HepG2 (cell line): ENCODE measurements at regions of chr16 and their contacts with region 1.

Region 1: DNA sequence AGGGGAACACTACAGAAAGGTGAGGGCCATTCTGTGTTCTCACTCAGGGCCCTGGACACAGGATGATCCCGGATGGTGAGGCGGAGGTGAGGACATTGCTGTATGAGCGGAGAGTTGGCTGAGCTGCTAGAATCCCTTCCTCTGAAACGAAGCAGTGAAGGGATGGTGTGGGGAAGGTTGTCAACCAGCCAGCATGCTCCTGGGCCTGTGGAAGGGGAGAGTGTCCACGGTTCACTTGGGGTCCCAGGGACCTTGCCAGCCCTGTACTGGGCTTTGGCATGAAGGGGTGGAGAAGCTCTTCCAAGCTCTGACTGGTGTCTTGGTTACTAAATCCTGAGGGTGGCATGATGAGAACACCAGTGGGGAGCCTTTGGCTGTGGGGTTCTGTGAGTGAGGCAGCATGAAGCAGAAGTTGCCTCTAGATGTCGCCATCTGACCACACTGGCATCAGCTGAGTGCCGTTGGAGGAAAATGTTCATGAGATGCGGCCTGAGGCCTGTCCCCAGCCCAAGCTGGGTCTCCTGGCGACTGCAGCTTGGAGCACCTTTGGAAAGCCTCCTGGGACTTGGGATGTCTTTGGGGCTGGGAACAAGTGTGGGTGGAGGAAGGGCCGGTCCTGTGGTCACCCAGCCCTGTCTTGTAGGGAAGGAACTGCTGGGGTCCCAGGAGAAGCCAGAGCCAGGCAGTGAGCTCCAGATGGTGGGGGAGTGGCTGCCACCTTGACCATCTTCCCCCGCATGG is 14.8 kb downstream of the PDP2 start:
- DNase-seq: peak; percentile 80
- ATAC-seq: peak; percentile 90
- H3K4me3 ChIP-seq: no peak overlapping the region; a peak in 1 of 6 replicates
- H3K27ac ChIP-seq: no peak overlapping the region
- H3K4me1 ChIP-seq: peaks cover 63% of the 10 kb centered on the region
- H3K27me3 ChIP-seq: peaks cover 0 to 2% of the 10 kb centered on the region in 2 experiments; a peak in 1 of 5 replicates
- CTCF ChIP-seq: peak; percentile 100
- EP300 ChIP-seq: no peak
- POLR2A ChIP-seq: no peak
- RAD21 ChIP-seq: peak; percentile 99

Region 2: DNA sequence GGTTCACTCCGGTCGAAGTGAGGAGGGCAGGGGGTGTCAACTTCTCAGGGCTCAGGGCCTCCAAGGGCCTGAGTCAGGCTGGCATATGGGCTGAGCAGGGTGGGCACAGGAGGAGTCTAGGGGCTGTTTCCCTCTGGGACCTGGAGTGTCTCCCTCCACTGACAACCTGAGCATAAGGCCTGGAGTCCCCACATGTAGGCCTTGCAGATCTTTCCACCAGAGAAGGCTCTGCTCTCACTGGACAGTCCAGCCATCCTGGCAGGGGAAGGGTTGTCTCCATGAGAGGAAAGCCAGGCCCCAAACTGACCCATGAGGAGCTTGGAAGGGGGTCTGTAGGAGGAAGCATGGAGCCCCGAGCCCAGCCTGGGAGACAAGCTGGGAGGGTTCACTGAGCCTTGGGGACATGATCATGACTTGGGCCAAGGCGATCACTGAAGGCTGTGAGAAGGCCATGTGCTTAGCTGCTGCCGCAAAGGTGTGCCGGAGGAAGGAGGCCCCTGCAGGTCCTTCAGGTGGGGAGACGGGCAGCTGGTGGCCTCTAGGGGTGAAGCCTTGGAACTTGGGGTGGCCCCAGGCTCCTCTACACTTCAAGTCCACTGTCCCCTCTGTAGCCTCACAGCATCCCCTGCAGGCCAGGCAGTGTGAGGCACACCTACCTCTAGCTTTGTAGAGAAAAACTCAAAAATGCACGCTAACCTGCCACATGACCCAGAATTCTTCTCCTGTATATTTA is 306.0 kb before region 1 on chr16:
- CTCF ChIA-PET with region 1: no interaction called
- POLR2A ChIA-PET with region 1: no interaction called
- in situ Hi-C with region 1: no loop called
- intact Hi-C with region 1: no loop called
- DNase-seq: peak; percentile 55
- ATAC-seq: peak; percentile 95
- H3K4me3 ChIP-seq: no peak overlapping the region
- H3K27ac ChIP-seq: no peak overlapping the region
- H3K4me1 ChIP-seq: peaks cover 9% of the 10 kb centered on the region; the same call in 1 of the 2 replicates
- H3K27me3 ChIP-seq: peaks cover 3 to 28% of the 10 kb centered on the region in 2 experiments; a peak in 4 of 5 replicates
- CTCF ChIP-seq: peak; percentile 84
- EP300 ChIP-seq: no peak
- POLR2A ChIP-seq: no peak
- RAD21 ChIP-seq: peak; percentile 79

Region 3: DNA sequence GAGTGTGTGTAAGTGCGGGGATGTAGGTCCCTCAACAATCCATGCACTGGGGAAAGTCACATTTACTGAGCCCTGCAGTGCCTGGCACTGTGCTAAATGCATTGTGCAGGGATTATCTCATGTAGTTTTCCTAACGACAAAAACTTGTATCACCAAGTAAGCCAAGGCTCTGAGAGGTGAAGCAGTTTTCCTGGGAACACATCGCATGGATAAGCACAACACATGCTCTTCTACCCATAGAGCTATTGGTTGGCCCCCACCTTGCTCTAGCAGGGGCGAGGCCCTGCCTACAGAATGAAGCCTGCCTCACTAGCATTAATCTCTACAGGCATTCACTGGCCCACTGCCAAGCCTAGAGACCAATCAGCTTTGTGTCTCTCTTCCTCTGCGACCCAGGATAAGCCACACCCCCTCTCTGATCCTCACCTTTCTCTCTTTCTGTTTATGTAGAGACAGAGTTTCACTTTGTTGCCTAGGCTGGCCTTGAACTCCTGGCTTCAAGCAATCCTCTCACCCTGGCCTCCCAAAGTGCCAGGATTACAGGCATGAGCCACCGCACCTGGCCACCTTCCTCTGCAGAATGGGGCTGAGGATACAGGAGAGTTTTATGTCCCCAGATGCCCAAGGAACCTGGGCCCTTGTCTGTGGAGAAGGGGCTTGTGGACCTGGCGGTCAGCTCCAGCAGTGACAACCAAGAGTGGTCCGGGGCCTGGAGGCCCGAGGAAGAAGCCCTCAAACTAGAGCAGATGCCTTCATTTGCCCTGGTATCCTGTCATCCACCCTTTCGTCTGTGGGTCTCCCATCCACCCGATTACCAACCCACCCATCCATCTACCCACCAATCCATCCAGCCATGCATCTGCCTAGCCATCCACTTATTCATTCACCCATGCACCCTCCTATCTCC is 10.8 kb after region 1 on chr16:
- CTCF ChIA-PET with region 1: interaction called, 10 read pairs
- POLR2A ChIA-PET with region 1: interaction called, 13 read pairs
- in situ Hi-C with region 1: no loop called
- intact Hi-C with region 1: no loop called
- DNase-seq: peak; percentile 99
- ATAC-seq: peak; percentile 73
- H3K4me3 ChIP-seq: peak overlapping the region; percentile 52 to 72 (median 56)
- H3K27ac ChIP-seq: peak overlapping the region; percentile 75
- H3K4me1 ChIP-seq: peaks cover 84% of the 10 kb centered on the region
- H3K27me3 ChIP-seq: no peaks in the 10 kb centered on the region
- CTCF ChIP-seq: 0 out of 2 replicates have a peak, but pooled peaks have one; percentile 8
- EP300 ChIP-seq: peak in 1 of 2 experiments; percentile 75; a peak in 2 of 4 replicates
- POLR2A ChIP-seq: peak; percentile 54 to 66
- RAD21 ChIP-seq: no peak

Region 4: GRCh38 chr16:66911112-66911511 is 16.0 kb after region 1 on chr16:
- CTCF ChIA-PET with region 1: interaction called, 10 read pairs
- POLR2A ChIA-PET with region 1: interaction called, 86 read pairs
- in situ Hi-C with region 1: no loop called
- intact Hi-C with region 1: no loop called
- DNase-seq: no peak
- ATAC-seq: no peak
- H3K4me3 ChIP-seq: no peak overlapping the region
- H3K27ac ChIP-seq: no peak overlapping the region
- H3K4me1 ChIP-seq: peaks cover 34% of the 10 kb centered on the region
- H3K27me3 ChIP-seq: no peaks in the 10 kb centered on the region; a peak in 1 of 5 replicates
- CTCF ChIP-seq: no peak
- EP300 ChIP-seq: no peak
- POLR2A ChIP-seq: no peak
- RAD21 ChIP-seq: no peak

Region 5: GRCh38 chr16:66924527-66925321 is 29.6 kb after region 1 on chr16:
- CTCF ChIA-PET with region 1: interaction called, 37 read pairs
- POLR2A ChIA-PET with region 1: interaction called, 86 read pairs
- in situ Hi-C with region 1: no loop called
- intact Hi-C with region 1: loop called (anchors 1 kb)
- DNase-seq: no peak
- ATAC-seq: peak; percentile 79
- H3K4me3 ChIP-seq: peak overlapping the region; percentile 40 to 73 (median 56); a peak in 4 of 6 replicates
- H3K27ac ChIP-seq: no peak overlapping the region
- H3K4me1 ChIP-seq: peaks cover 44% of the 10 kb centered on the region
- H3K27me3 ChIP-seq: peaks cover 5 to 22% of the 10 kb centered on the region in 2 experiments; a peak in 4 of 5 replicates
- CTCF ChIP-seq: peak; percentile 77
- EP300 ChIP-seq: no peak
- POLR2A ChIP-seq: no peak
- RAD21 ChIP-seq: peak; percentile 95

Region 6: DNA sequence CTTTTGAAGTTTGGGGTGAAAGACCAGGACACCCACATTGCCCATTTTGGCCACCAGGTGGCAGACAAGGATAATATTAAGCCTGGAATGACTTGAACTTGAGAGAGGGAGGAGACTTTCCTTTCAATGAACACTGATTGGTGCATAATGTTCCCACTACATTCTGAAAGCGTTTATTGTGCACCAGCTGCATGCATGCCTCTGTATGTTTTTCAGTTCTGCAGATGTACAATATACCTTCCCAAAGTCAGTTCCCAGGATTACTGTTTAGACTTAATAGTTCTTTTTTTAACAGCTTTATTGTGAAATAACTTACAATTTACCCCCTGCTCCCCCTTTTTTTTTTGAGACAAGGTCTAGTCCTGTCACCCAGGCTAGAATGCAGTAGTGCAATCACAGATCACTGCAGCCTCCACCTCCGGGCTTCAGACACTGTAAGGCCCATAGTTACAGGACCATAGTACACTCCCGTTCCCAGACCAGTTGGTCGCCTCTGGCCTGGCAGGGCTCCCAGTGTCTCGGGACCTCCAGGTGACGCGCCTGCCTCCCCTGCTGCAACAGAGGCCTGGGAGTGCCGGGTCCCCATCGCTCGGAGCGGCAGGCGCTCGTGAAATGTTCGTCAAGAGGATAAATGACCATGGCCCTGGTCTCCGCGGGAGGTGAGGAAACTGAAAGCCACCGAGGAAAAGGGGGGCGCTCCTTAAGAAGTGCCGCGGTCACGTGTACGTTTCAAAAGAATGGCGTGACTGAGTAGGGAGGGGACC is 52.4 kb after region 1 on chr16:
- CTCF ChIA-PET with region 1: interaction called, 17 read pairs
- POLR2A ChIA-PET with region 1: interaction called, 3 read pairs
- in situ Hi-C with region 1: no loop called
- intact Hi-C with region 1: loop called (anchors 1 kb)
- DNase-seq: peak; percentile 89
- ATAC-seq: peak; percentile 78
- H3K4me3 ChIP-seq: peak overlapping the region; percentile 35 to 64 (median 37); a peak in 5 of 6 replicates
- H3K27ac ChIP-seq: no peak overlapping the region
- H3K4me1 ChIP-seq: peaks cover 34% of the 10 kb centered on the region
- H3K27me3 ChIP-seq: peaks cover 4 to 24% of the 10 kb centered on the region in 2 experiments; a peak in 4 of 5 replicates
- CTCF ChIP-seq: peak; percentile 92
- EP300 ChIP-seq: no peak
- POLR2A ChIP-seq: peak in 1 of 2 experiments; percentile 49; a peak in 1 of 4 replicates
- RAD21 ChIP-seq: peak; percentile 76

Region 7: DNA sequence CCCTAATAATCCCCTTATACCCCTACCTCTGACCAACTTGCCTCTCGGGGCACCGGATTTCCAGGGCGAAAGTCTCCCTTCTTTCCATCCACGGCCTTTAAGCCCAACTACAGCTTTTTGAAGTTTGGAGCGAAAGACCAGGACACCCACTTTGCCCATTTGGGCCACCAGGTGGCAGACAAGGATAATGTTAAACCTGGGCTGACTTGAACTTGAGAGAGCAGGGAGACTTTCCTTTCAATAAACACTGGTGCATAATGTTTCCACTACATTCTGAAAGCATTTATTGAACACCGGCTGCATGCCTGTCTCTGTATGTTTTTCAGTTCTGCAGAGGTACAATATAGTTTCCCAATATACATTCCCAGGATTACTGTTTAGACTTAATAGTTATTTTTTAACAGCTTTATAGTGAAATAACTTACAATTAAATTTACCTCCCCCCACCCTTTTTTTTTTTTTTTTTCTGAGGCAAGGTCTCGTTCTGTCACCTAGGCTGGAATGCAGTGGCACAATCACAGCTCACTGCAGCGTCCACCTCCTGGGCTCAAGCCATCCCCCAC is 59.1 kb after region 1 on chr16:
- CTCF ChIA-PET with region 1: interaction called, 13 read pairs
- POLR2A ChIA-PET with region 1: no interaction called
- in situ Hi-C with region 1: no loop called
- intact Hi-C with region 1: loop called (anchors 2 kb)
- DNase-seq: peak; percentile 85
- ATAC-seq: peak; percentile 86
- H3K4me3 ChIP-seq: peak overlapping the region in 2 of 3 experiments; percentile 25 to 40; a peak in 4 of 6 replicates
- H3K27ac ChIP-seq: no peak overlapping the region
- H3K4me1 ChIP-seq: peaks cover 73% of the 10 kb centered on the region
- H3K27me3 ChIP-seq: peaks cover 3 to 14% of the 10 kb centered on the region in 2 experiments; a peak in 4 of 5 replicates
- CTCF ChIP-seq: peak; percentile 96
- EP300 ChIP-seq: no peak
- POLR2A ChIP-seq: no peak
- RAD21 ChIP-seq: peak; percentile 79